ENCODE measurements at regions of chr11 and their contacts with region 1.

Region 1: DNA sequence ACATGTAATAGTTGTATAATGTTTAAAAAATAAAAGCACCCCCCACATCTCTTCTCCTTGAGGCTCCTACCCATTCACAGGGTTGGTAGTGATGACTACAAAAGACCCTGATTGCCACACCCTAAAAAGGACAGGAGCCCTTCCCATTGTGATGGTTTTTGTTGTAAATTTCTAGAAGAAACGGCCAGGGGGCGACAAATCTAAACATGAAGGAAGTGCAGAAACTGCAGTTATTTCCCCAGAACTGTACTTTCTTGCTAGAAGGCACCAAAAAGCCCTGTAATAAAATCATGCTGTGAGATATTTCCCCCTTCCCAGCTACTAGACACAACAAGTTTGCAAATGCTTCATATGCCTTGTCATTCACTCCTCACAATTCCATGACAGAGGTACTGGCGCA is 10.8 kb downstream of the PRR5L start:
- DNase-seq: no peak
- H3K4me3 Mint-ChIP-seq: no peak overlapping the region
- H3K27ac Mint-ChIP-seq: no peak overlapping the region
- H3K4me1 Mint-ChIP-seq: peaks cover 9% of the 10 kb centered on the region
- H3K27me3 Mint-ChIP-seq: peaks cover 6% of the 10 kb centered on the region

Region 2: GRCh38 chr11:36478700-36479329 is 171.9 kb after region 1 on chr11:
- intact Hi-C with region 1: loop called (anchors 1 kb)
- DNase-seq: peak; percentile 14
- H3K4me3 Mint-ChIP-seq: no peak overlapping the region
- H3K27ac Mint-ChIP-seq: no peak overlapping the region
- H3K4me1 Mint-ChIP-seq: peaks cover 11% of the 10 kb centered on the region
- H3K27me3 Mint-ChIP-seq: no peaks in the 10 kb centered on the region

Measured in activated T-helper 1 cell treated with anti-CD3 and anti-CD28 coated beads, Interleukin-12 subunit alpha, Interleukin-12 subunit beta, Interleukin-2, Interleukin-4 antibody, amounts not matched to agents 30 ng/mL and 10 ng/mL and 1 ng/mL, durations not matched to agents 14 hours and 24 hours and 36 hours (primary cell).